Mammary epithelial cell (primary cell): ENCODE measurements at regions of chr1 and their contacts with region 1.

Region 1: DNA sequence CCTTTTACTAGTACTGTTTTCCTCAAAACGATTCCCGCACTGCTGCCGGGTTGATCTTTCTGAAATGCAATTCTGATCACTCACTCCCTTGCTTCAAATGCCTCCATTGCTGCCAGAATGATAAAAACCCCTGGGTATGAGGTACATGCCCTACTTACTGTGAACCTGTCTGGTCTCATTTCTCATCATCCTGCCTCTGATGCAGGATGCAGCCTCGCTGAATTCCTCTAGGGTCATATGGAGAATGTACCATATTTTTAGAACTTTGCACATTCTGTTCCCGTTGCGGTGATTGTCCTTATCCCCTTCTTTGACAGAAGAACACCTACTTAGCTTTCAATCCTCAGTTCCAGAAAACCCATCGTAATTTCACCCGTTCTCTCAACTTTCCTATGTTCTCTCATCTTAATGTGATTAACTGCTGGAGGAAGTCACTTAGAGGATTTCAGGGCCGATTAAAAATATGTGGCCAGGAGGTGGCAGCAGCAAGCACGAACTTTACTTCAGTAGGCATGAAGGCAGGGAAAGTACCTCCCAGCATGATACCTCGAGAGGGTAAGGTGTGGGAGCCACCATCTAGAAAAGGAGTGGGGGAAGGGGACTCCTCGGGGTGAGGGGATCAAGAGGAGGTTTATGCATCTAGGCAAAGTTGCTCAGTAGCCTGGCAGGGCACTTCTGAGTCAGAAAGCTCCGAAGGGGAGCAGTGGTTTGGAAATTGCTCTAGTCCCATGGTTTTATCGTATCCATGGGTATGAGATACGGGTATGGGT is 361.5 kb upstream of the ZP4 start:
- DNase-seq: peak; percentile 58
- H3K4me3 ChIP-seq: no peak overlapping the region
- H3K27ac ChIP-seq: no peak overlapping the region
- H3K4me1 ChIP-seq: no peaks in the 10 kb centered on the region
- H3K27me3 ChIP-seq: no peaks in the 10 kb centered on the region
- CTCF ChIP-seq: peak; percentile 49 to 66

Region 2: GRCh38 chr1:237851210-237851845 is 400.9 kb before region 1 on chr1:
- CTCF ChIA-PET with region 1: no interaction called
- dilution Hi-C with region 1: no loop called
- in situ Hi-C with region 1: loop called in 1 of 2 experiments (anchors 25 kb)
- intact Hi-C with region 1: loop called (anchors 1 kb)
- DNase-seq: peak; percentile 41
- H3K4me3 ChIP-seq: no peak overlapping the region
- H3K27ac ChIP-seq: no peak overlapping the region
- H3K4me1 ChIP-seq: no peaks in the 10 kb centered on the region
- H3K27me3 ChIP-seq: no peaks in the 10 kb centered on the region
- CTCF ChIP-seq: peak; percentile 87 to 92

Region 3: GRCh38 chr1:237953238-237953637 is 299.0 kb before region 1 on chr1:
- CTCF ChIA-PET with region 1: no interaction called
- dilution Hi-C with region 1: no loop called
- in situ Hi-C with region 1: no loop called
- intact Hi-C with region 1: loop called (anchors 2 kb)
- DNase-seq: peak; percentile 43
- H3K4me3 ChIP-seq: no peak overlapping the region
- H3K27ac ChIP-seq: no peak overlapping the region
- H3K4me1 ChIP-seq: no peaks in the 10 kb centered on the region
- H3K27me3 ChIP-seq: no peaks in the 10 kb centered on the region
- CTCF ChIP-seq: peak; percentile 35 to 81

Region 4: GRCh38 chr1:238589843-238590435 is 337.7 kb after region 1 on chr1:
- CTCF ChIA-PET with region 1: no interaction called
- dilution Hi-C with region 1: no loop called
- in situ Hi-C with region 1: no loop called
- intact Hi-C with region 1: loop called (anchors 10 kb)
- DNase-seq: no peak
- H3K4me3 ChIP-seq: no peak overlapping the region
- H3K27ac ChIP-seq: no peak overlapping the region
- H3K4me1 ChIP-seq: no peaks in the 10 kb centered on the region
- H3K27me3 ChIP-seq: no peaks in the 10 kb centered on the region
- CTCF ChIP-seq: no peak

Region 5: GRCh38 chr1:238690415-238690814 is 438.2 kb after region 1 on chr1:
- CTCF ChIA-PET with region 1: no interaction called
- dilution Hi-C with region 1: no loop called
- in situ Hi-C with region 1: no loop called
- intact Hi-C with region 1: loop called (anchors 1 kb)
- DNase-seq: peak; percentile 9
- H3K4me3 ChIP-seq: no peak overlapping the region
- H3K27ac ChIP-seq: no peak overlapping the region
- H3K4me1 ChIP-seq: no peaks in the 10 kb centered on the region
- H3K27me3 ChIP-seq: no peaks in the 10 kb centered on the region
- CTCF ChIP-seq: peak; percentile 11 to 39

Region 6: GRCh38 chr1:239898062-239898730 is 1646.0 kb after region 1 on chr1:
- CTCF ChIA-PET with region 1: no interaction called
- dilution Hi-C with region 1: no loop called
- in situ Hi-C with region 1: no loop called
- intact Hi-C with region 1: loop called (anchors 5 kb)
- DNase-seq: peak; percentile 40
- H3K4me3 ChIP-seq: no peak overlapping the region
- H3K27ac ChIP-seq: no peak overlapping the region
- H3K4me1 ChIP-seq: no peaks in the 10 kb centered on the region
- H3K27me3 ChIP-seq: no peaks in the 10 kb centered on the region
- CTCF ChIP-seq: peak; percentile 90 to 95